Panc1 (cell line): ENCODE measurements at regions of chr21 and their contacts with region 1.

Region 1: GRCh38 chr21:31410499-31411131 is 66.6 kb upstream of the TIAM1 start:
- DNase-seq: no peak
- ATAC-seq: no peak
- H3K4me3 ChIP-seq: no peak overlapping the region
- H3K27ac ChIP-seq: no peak overlapping the region
- H3K4me1 ChIP-seq: no peaks in the 10 kb centered on the region
- H3K27me3 ChIP-seq: no peaks in the 10 kb centered on the region
- CTCF ChIP-seq: no peak

Region 2: DNA sequence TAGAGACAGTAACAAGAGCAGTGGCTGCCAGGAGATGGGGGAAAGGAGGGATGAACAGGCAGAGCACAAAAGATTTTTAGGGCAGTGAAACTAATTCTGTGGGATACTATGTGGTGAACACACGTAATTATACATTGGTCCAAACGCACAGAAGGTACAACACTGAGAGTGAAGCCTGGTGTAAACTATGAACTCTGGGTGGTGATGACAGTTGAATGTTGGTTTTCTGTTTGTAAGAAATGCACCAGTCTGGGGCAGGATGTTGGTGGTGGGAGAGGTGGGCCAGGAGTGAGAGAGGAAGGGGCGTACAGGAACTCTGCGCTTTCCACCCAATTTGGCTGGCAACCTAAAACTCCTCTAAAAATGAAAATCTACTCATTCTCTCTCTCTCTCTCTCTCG is 16.3 kb before region 1 on chr21:
- CTCF ChIA-PET with region 1: no interaction called
- POLR2A ChIA-PET with region 1: interaction called, 13 read pairs
- in situ Hi-C with region 1: no loop called
- intact Hi-C with region 1: no loop called
- DNase-seq: no peak
- ATAC-seq: no peak
- H3K4me3 ChIP-seq: no peak overlapping the region
- H3K27ac ChIP-seq: no peak overlapping the region
- H3K4me1 ChIP-seq: no peaks in the 10 kb centered on the region
- H3K27me3 ChIP-seq: no peaks in the 10 kb centered on the region
- CTCF ChIP-seq: no peak

Region 3: DNA sequence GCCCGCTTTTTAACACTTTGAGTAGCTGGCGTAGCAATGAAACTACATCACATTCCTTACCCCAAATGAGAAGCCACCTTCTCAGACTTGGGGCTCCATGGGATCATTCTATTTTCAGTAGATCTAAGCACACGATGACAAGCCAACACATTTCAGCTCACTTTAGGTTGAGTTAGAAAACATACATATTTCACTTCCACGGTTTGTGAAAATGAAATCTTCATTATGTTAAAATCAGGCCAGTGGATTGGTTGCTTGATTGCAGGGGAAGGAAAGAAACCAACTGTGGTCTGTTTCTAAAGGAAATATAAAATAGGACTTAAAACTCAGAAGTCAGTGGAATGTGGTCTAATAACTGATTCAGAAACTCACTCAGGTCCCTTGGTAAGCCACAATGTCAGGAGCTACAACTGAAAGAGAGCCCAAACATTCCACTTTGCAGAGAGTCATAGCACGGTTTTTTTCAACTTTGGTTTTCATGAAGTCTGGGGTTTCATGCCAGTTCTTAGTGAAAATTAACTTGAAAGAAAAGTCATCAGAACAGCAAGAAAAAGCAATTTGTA is 15.7 kb after region 1 on chr21:
- CTCF ChIA-PET with region 1: no interaction called
- POLR2A ChIA-PET with region 1: no interaction called
- in situ Hi-C with region 1: no loop called
- intact Hi-C with region 1: no loop called
- DNase-seq: no peak
- ATAC-seq: no peak
- H3K4me3 ChIP-seq: no peak overlapping the region
- H3K27ac ChIP-seq: no peak overlapping the region
- H3K4me1 ChIP-seq: no peaks in the 10 kb centered on the region
- H3K27me3 ChIP-seq: no peaks in the 10 kb centered on the region
- CTCF ChIP-seq: no peak

Region 4: DNA sequence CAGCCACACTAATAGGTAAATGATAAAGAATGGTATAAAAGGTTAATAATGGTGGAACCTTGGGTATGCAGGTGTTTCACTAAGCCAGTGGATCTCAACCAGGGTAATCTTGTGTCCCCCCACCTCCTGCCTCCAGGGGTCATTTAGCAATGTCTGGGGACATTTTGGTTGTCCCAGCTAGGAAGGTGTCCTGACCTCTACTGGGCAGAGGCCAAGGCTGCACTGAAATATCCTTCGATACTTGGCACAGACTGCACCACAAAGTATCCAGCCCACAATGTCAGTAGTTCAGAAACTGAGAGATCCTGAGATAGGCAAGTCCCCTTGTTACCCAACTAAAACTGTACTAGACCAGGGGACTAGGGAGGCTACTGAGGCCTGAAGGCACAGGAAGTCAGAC is 47.1 kb after region 1 on chr21:
- CTCF ChIA-PET with region 1: no interaction called
- POLR2A ChIA-PET with region 1: no interaction called
- in situ Hi-C with region 1: no loop called
- intact Hi-C with region 1: no loop called
- DNase-seq: no peak
- ATAC-seq: no peak
- H3K4me3 ChIP-seq: no peak overlapping the region
- H3K27ac ChIP-seq: no peak overlapping the region
- H3K4me1 ChIP-seq: no peaks in the 10 kb centered on the region
- H3K27me3 ChIP-seq: no peaks in the 10 kb centered on the region
- CTCF ChIP-seq: no peak